ENCODE measurements at regions of chr10 and their contacts with region 1.

Region 1: GRCh38 chr10:71075086-71075758 is 137.1 kb upstream of the UNC5B start:
- DNase-seq: peak in 4 of 5 donors; percentile 40 to 76 (median 61)
- ATAC-seq: peak; percentile 59 to 79 (median 68)
- H3K4me3 ChIP-seq: no peak overlapping the region
- H3K27ac ChIP-seq: no peak overlapping the region
- H3K4me1 ChIP-seq: peaks cover 0 to 32% (median 7%) of the 10 kb centered on the region in 12 donors
- H3K27me3 ChIP-seq: no peaks in the 10 kb centered on the region
- CTCF ChIP-seq: no peak
- POLR2A ChIP-seq: no peak

Region 2: GRCh38 chr10:71187600-71187999 is 112.4 kb after region 1 on chr10:
- intact Hi-C with region 1: loop called in 2 of 10 experiments (anchors 10 kb)
- DNase-seq: peak in 4 of 5 donors; percentile 55 to 74 (median 69)
- ATAC-seq: peak; percentile 72 to 93 (median 80)
- H3K4me3 ChIP-seq: no peak overlapping the region
- H3K27ac ChIP-seq: peak overlapping the region in 2 of 12 donors; percentile 9 to 29
- H3K4me1 ChIP-seq: peaks cover 0 to 32% (median 11%) of the 10 kb centered on the region in 12 donors
- H3K27me3 ChIP-seq: peaks cover 0 to 7% (median 0%) of the 10 kb centered on the region in 9 donors
- CTCF ChIP-seq: peak in 4 of 12 donors; percentile 11 to 25 (median 19)
- POLR2A ChIP-seq: no peak